GM12878 (cell line): ENCODE measurements at regions of chr1 and their contacts with region 1.

Region 1: GRCh38 chr1:160837558-160838205 is 25.0 kb downstream of the CD244 start:
- DNase-seq: peak; percentile 78
- ATAC-seq: peak; percentile 95
- H3K4me3 ChIP-seq: no peak overlapping the region
- H3K27ac ChIP-seq: peak overlapping the region; percentile 87
- H3K4me1 ChIP-seq: peaks cover 28% of the 10 kb centered on the region
- H3K27me3 ChIP-seq: no peaks in the 10 kb centered on the region
- CTCF ChIP-seq: peak; percentile 47 to 55 (median 53)
- EP300 ChIP-seq: peak in 1 of 2 experiments; percentile 47; a peak in 1 of 4 replicates
- POLR2A ChIP-seq: peak; percentile 70
- RAD21 ChIP-seq: peak; percentile 34; the same call in 1 of the 2 replicates

Region 2: DNA sequence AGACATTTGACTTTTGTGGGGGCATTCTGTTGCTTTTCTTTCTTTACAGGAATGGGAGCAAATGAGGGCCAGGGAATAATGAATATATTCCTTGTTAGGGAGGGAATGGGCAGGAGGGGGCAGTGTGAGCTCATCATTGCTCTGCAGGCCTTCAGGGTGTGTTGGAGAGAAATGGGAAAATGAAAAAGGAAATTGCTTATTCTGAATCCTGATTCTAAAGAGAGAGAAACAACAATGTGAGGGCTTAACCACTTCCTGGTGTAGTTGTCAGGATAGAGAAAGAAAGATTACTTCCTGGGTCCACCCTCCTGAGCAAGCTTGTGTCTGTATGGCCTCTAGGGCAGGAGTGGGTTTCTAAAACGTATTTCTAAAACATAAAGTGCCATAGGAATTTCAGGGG is 409.0 kb before region 1 on chr1:
- CTCF ChIA-PET with region 1: no interaction called
- POLR2A ChIA-PET with region 1: no interaction called
- RAD21 ChIA-PET with region 1: no interaction called
- SMC1A ChIA-PET with region 1: no interaction called
- in situ Hi-C with region 1: no loop called
- intact Hi-C with region 1: no loop called
- DNase-seq: peak; percentile 81
- ATAC-seq: peak; percentile 54
- H3K4me3 ChIP-seq: no peak overlapping the region
- H3K27ac ChIP-seq: peak overlapping the region; percentile 100
- H3K4me1 ChIP-seq: peaks cover 52% of the 10 kb centered on the region
- H3K27me3 ChIP-seq: no peaks in the 10 kb centered on the region
- CTCF ChIP-seq: peak; percentile 58 to 90 (median 58); a peak in 5 of 6 replicates
- EP300 ChIP-seq: no peak
- POLR2A ChIP-seq: no peak
- RAD21 ChIP-seq: peak; percentile 98

Region 3: GRCh38 chr1:160590488-160590887 is 247.2 kb before region 1 on chr1:
- CTCF ChIA-PET with region 1: no interaction called
- POLR2A ChIA-PET with region 1: no interaction called
- RAD21 ChIA-PET with region 1: no interaction called
- SMC1A ChIA-PET with region 1: no interaction called
- in situ Hi-C with region 1: no loop called
- intact Hi-C with region 1: no loop called
- DNase-seq: no peak
- ATAC-seq: no peak
- H3K4me3 ChIP-seq: no peak overlapping the region
- H3K27ac ChIP-seq: no peak overlapping the region
- H3K4me1 ChIP-seq: no peaks in the 10 kb centered on the region
- H3K27me3 ChIP-seq: no peaks in the 10 kb centered on the region
- CTCF ChIP-seq: no peak
- EP300 ChIP-seq: no peak
- POLR2A ChIP-seq: no peak
- RAD21 ChIP-seq: no peak

Region 4: DNA sequence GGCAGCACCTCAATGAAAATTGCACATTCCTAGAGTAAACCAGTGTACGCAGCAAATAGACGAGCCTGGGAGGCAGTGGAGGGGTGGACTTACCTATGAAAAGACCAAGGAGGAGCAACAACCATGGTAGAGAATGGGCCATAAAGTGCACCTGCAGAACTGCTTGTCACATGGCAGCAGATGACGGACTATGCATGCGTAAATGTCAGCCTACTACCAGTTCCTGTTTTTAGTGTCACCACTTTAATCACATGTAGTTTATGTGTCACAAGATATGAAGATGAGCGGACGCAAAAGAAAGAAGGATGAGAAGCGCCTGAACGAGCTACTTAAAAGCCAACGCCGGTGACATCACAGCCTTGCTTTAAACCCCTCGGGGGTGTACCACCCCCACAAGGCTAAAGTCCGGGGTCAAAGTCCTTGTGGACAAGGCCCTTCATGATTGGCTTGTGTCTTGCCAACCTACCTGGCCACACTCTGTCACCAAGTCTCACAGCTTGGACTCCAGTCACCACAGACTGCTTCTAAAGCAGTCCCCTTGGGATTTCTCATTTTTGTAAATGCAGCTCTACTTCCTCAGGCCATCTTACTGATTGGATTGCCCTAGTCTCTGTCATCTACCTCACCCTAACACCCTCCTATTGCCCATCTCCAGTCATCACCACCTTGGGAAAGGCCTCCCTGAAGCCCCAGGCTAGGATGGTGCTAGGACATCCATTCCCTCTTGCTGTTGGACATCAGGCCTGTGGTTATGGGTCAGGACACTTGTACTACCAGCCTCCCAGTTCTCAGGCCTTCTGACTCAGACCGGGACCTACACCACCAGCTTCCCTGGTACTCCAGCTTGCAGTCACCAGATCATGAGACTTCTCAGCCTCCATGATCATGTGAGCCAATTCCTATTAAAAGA is 47.7 kb before region 1 on chr1:
- CTCF ChIA-PET with region 1: interaction called, 12 read pairs
- POLR2A ChIA-PET with region 1: no interaction called
- RAD21 ChIA-PET with region 1: interaction called, 10 read pairs
- SMC1A ChIA-PET with region 1: interaction called, 13 read pairs
- in situ Hi-C with region 1: no loop called
- intact Hi-C with region 1: no loop called
- DNase-seq: peak; percentile 89
- ATAC-seq: peak; percentile 91
- H3K4me3 ChIP-seq: no peak overlapping the region; the same call in 1 of the 2 replicates
- H3K27ac ChIP-seq: peak overlapping the region; percentile 86
- H3K4me1 ChIP-seq: peaks cover 19% of the 10 kb centered on the region
- H3K27me3 ChIP-seq: no peaks in the 10 kb centered on the region
- CTCF ChIP-seq: no peak
- EP300 ChIP-seq: peak; percentile 96 to 99
- POLR2A ChIP-seq: no peak
- RAD21 ChIP-seq: no peak

Region 5: GRCh38 chr1:160806109-160806665 is 31.5 kb before region 1 on chr1:
- CTCF ChIA-PET with region 1: interaction called, 18 read pairs
- POLR2A ChIA-PET with region 1: no interaction called
- RAD21 ChIA-PET with region 1: interaction called, 5 read pairs
- SMC1A ChIA-PET with region 1: interaction called, 3 read pairs
- in situ Hi-C with region 1: no loop called
- intact Hi-C with region 1: no loop called
- DNase-seq: no peak
- ATAC-seq: peak; percentile 77
- H3K4me3 ChIP-seq: no peak overlapping the region
- H3K27ac ChIP-seq: no peak overlapping the region
- H3K4me1 ChIP-seq: no peaks in the 10 kb centered on the region; the same call in 1 of the 2 replicates
- H3K27me3 ChIP-seq: no peaks in the 10 kb centered on the region
- CTCF ChIP-seq: no peak
- EP300 ChIP-seq: no peak
- POLR2A ChIP-seq: no peak
- RAD21 ChIP-seq: no peak

Region 6: DNA sequence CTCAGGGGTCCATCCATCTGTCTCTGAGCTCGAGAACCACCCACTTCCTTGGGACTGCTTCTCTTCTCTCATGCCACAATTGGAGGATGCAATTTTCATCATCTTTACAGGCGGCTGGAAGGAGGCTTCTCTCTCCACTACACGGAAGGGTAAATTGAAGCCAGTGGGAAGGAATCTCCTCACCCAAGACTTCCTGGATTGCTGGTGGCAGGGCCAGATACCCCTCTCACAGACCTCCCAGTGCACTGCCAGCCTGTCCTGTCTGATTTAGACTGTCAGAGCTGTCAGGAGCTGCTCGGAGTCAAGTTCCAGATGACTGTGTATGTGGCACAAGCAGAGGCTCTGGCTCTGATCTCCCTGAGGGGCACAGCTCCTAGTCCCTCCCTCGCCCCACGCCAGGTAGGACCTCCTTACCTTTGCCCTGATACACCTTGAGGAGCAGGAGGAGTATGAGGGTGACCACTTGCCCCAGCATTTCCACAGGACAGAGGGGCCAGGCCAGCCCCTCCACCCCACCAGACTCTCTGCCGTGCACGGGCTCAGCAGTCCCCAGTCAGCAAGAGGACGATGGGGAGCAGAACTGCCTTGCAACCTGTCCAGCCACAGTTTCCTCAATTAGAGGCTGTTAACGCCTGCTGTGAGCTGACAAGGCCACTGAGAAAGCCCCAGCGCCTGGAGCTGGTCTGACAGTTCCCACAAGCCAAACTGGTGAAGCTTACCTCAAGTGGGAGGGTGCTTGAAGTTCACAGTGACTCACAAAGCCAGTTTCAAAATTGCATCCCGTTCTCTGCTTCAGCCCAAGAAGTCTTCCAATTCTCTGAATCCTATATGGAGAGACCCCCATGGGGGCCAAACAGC is 24.8 kb after region 1 on chr1 and contains the start of gene CD244:
- CTCF ChIA-PET with region 1: interaction called, 99 read pairs
- POLR2A ChIA-PET with region 1: interaction called, 25 read pairs
- RAD21 ChIA-PET with region 1: interaction called, 50 read pairs
- SMC1A ChIA-PET with region 1: interaction called, 229 read pairs
- in situ Hi-C with region 1: no loop called
- intact Hi-C with region 1: no loop called
- DNase-seq: peak; percentile 71
- ATAC-seq: peak; percentile 96
- H3K4me3 ChIP-seq: peak within 1 kb of the TSS; percentile 32; the same call in 1 of the 2 replicates
- H3K27ac ChIP-seq: no peak within 1 kb of the TSS
- H3K4me1 ChIP-seq: peaks cover 15% of the 10 kb centered on the region
- H3K27me3 ChIP-seq: no peaks in the 10 kb centered on the region
- CTCF ChIP-seq: no peak
- EP300 ChIP-seq: peak in 1 of 2 experiments; percentile 60; a peak in 1 of 4 replicates
- POLR2A ChIP-seq: peak; percentile 56
- RAD21 ChIP-seq: no peak
- polyA plus RNA-seq, gene CD244: 0.24 to 0.37 TPM

Region 7: GRCh38 chr1:160877221-160877620 is 39.5 kb after region 1 on chr1:
- CTCF ChIA-PET with region 1: interaction called, 80 read pairs
- POLR2A ChIA-PET with region 1: no interaction called
- RAD21 ChIA-PET with region 1: interaction called, 12 read pairs
- SMC1A ChIA-PET with region 1: interaction called, 39 read pairs
- in situ Hi-C with region 1: no loop called
- intact Hi-C with region 1: loop called (anchors 1 kb)
- DNase-seq: no peak
- ATAC-seq: peak; percentile 75
- H3K4me3 ChIP-seq: no peak overlapping the region
- H3K27ac ChIP-seq: no peak overlapping the region
- H3K4me1 ChIP-seq: no peaks in the 10 kb centered on the region
- H3K27me3 ChIP-seq: no peaks in the 10 kb centered on the region
- CTCF ChIP-seq: peak; percentile 32 to 37 (median 37); a peak in 5 of 6 replicates
- EP300 ChIP-seq: no peak
- POLR2A ChIP-seq: no peak
- RAD21 ChIP-seq: peak; percentile 47

Region 8: GRCh38 chr1:160942926-160943325 is 105.2 kb after region 1 on chr1:
- CTCF ChIA-PET with region 1: interaction called, 3 read pairs
- POLR2A ChIA-PET with region 1: interaction called, 3 read pairs
- RAD21 ChIA-PET with region 1: interaction called, 3 read pairs
- SMC1A ChIA-PET with region 1: interaction called, 17 read pairs
- in situ Hi-C with region 1: no loop called
- intact Hi-C with region 1: no loop called
- DNase-seq: no peak
- ATAC-seq: peak; percentile 58; the same call in 2 of the 3 replicates
- H3K4me3 ChIP-seq: no peak overlapping the region
- H3K27ac ChIP-seq: no peak overlapping the region
- H3K4me1 ChIP-seq: no peaks in the 10 kb centered on the region
- H3K27me3 ChIP-seq: no peaks in the 10 kb centered on the region
- CTCF ChIP-seq: peak; percentile 8 to 53 (median 25); a peak in 4 of 6 replicates
- EP300 ChIP-seq: no peak
- POLR2A ChIP-seq: no peak
- RAD21 ChIP-seq: peak; percentile 25; the same call in 1 of the 2 replicates

Region 9: DNA sequence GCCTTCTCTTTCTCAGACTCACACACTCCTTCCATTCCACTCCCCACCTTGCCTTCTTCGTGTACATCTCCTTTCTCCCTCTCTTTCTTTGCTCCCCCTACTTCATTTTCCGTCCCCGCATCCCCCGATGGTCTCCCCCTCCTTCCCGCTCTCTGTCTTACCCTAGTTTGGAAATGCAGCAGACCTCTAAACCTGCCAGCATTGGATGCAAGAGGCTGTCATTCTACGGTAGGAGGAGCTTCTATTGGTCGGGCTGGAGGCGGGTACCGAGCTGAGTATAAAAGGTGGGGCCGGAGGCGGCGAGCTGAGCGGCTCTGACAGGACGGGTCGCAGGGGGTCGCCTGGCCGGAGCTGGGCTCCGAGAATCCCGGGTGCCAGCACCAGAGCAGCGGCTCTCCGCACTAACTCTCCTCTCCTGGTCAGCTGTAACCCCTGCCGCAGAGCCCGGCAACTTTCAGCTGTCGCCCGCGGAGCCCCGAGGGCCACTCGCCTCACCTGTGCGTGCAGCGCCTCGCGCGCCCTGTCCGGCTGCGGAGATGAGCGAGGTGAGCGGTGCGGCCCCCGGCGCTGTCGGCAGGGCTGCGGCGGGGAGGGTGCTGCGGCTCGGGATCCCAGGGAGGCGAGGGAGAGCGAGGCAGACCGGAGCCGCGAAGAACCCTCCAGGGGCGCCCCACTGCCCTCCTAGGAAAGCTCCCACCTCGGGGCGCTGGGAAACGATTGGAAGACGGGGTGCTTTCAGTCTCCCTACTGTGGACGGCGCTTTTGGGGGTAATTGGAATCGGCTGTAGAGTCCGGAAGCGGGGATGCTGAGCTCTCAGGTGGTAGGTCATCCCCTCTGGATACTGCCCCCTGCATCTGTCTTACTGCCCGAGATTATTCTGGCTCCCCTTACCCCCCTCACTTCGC is 421.0 kb after region 1 on chr1 and contains the start of gene PCP4L1:
- CTCF ChIA-PET with region 1: no interaction called
- POLR2A ChIA-PET with region 1: no interaction called
- RAD21 ChIA-PET with region 1: no interaction called
- SMC1A ChIA-PET with region 1: no interaction called
- in situ Hi-C with region 1: no loop called
- intact Hi-C with region 1: no loop called
- DNase-seq: no peak
- ATAC-seq: peak; percentile 76
- H3K4me3 ChIP-seq: peak within 1 kb of the TSS; percentile 47
- H3K27ac ChIP-seq: no peak within 1 kb of the TSS
- H3K4me1 ChIP-seq: peaks cover 13% of the 10 kb centered on the region
- H3K27me3 ChIP-seq: peaks cover 0 to 5% of the 10 kb centered on the region in 2 experiments; a peak in 1 of 4 replicates
- CTCF ChIP-seq: no peak
- EP300 ChIP-seq: no peak
- POLR2A ChIP-seq: no peak
- RAD21 ChIP-seq: no peak
- polyA plus RNA-seq, gene PCP4L1: 1.0 to 1.1 TPM